Heart right ventricle (tissue), 16 donors: ENCODE measurements at regions of chr3 and their contacts with region 1.

Region 1: DNA sequence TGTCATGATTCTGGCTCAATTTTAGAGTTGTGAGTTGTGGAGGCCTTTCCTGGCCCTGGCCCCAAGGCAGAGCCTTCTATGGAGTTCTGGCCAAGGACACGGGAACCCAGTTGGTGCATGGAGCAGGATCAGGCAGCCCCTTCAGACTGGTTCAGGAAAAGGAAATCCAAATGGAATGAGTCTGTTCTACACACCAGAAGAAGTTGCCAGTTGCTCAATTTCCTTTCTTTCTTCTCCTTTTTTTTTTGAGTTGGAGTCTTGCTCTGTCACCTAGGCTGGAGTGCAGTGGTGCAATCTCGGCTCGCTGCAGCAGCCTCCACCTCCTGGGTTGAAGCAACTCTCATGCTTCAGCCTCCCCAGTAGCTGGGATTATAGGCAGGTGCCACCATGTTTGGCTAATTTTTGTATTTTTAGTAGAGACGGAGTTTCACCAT is 28.9 kb upstream of the BHLHE40 start:
- DNase-seq: no peak
- ATAC-seq: peak in 5 of 8 donors; percentile 11 to 71 (median 59)
- H3K4me3 ChIP-seq: no peak overlapping the region
- H3K27ac ChIP-seq: peak overlapping the region in 1 of 10 donors; percentile 26
- H3K4me1 ChIP-seq: peaks cover 0 to 23% (median 9%) of the 10 kb centered on the region in 9 donors
- H3K27me3 ChIP-seq: no peaks in the 10 kb centered on the region
- CTCF ChIP-seq: no peak

Region 2: DNA sequence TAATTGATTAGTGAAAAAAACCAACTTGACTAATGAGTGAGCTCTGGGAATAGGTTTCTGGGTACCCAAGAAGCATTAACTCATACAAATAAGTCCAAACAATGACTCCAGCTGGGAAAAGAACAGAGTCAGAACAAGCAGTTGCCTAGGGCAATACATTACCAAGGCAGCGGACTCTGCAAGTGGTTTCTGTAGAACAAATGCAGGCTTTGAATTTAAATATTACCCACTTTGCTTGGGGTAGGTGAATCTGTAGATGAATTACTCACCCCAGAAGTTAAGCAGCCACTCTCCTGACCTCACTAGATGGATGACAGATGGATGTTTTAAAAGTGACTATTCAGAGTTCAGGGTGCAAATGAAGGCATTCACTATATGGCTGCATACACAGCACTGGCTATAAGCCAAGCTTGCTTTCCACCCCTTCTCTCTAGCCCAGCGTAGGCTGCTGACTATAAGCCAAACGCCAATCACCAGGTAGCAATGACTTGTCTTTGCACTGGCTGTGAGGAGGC is 44.2 kb before region 1 on chr3:
- intact Hi-C with region 1: loop called in 2 of 10 experiments (anchors 5 to 10 kb)
- DNase-seq: no peak
- ATAC-seq: peak in 1 of 8 donors; percentile 21
- H3K4me3 ChIP-seq: no peak overlapping the region
- H3K27ac ChIP-seq: no peak overlapping the region
- H3K4me1 ChIP-seq: peaks cover 0 to 20% (median 0%) of the 10 kb centered on the region in 9 donors
- H3K27me3 ChIP-seq: no peaks in the 10 kb centered on the region
- CTCF ChIP-seq: no peak

Region 3: DNA sequence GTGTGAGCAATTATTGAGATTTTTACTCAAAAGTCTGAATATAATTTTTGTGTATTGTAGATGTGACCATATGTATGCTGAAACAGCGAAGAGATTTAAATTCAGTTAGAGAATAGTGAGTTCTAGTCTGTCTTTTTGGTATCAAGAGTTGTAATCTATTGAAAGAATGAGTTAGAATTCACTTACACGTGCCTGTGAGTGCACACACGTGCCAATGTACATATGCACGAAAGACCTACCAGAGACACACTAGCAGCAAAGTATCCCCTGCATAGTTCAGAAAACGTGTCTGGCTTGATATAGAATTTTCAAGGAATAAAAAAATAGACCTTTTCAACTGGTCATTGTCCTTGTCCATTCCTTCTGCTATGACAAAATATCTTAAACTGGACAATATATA is 35.9 kb before region 1 on chr3:
- intact Hi-C with region 1: loop called in 2 of 10 experiments (anchors 5 to 10 kb)
- DNase-seq: no peak
- ATAC-seq: no peak
- H3K4me3 ChIP-seq: no peak overlapping the region
- H3K27ac ChIP-seq: no peak overlapping the region
- H3K4me1 ChIP-seq: no peaks in the 10 kb centered on the region
- H3K27me3 ChIP-seq: no peaks in the 10 kb centered on the region
- CTCF ChIP-seq: no peak